Kidney (tissue), 22 donors: ENCODE measurements at regions of chr1 and their contacts with region 1.

Region 1: GRCh38 chr1:47189844-47190508 is at the start of gene PDZK1IP1:
- DNase-seq: peak in 3 of 5 donors; percentile 34 to 96 (median 37)
- H3K4me3 ChIP-seq: peak within 1 kb of the TSS in 2 of 3 donors; percentile 88 to 93
- H3K27ac ChIP-seq: peak within 1 kb of the TSS; percentile 95 to 99
- H3K4me1 ChIP-seq: peaks cover 0 to 30% (median 21%) of the 10 kb centered on the region in 3 donors
- H3K27me3 ChIP-seq: no peaks in the 10 kb centered on the region
- CTCF ChIP-seq: no peak
- total RNA-seq, gene PDZK1IP1: 245 TPM

Region 2: DNA sequence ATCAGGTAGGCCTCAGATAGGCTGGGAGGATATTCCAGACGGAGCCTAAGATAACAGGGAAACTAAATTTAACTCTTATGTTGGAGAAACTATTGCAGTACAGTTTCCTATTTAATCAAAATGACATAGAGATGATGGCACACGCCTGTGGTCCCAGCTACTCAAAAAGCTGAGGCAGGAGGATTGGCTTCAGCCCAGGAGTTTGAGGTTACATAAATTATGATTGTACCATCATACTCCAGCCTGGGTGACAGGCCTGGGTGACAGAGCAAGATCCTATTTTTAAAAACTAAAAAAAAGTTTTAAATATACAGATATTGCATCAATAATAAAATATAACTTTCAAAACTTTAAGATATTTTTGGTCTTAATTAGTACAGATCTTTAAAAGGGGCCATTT is 67.2 kb after region 1 on chr1:
- intact Hi-C with region 1: loop called (anchors 10 kb)
- DNase-seq: no peak
- H3K4me3 ChIP-seq: no peak overlapping the region
- H3K27ac ChIP-seq: no peak overlapping the region
- H3K4me1 ChIP-seq: no peaks in the 10 kb centered on the region
- H3K27me3 ChIP-seq: no peaks in the 10 kb centered on the region
- CTCF ChIP-seq: no peak

Region 3: GRCh38 chr1:47515164-47515789 is 325.3 kb after region 1 on chr1:
- intact Hi-C with region 1: no loop called
- DNase-seq: peak in 2 of 5 donors; percentile 33 to 37
- H3K4me3 ChIP-seq: no peak overlapping the region
- H3K27ac ChIP-seq: no peak overlapping the region
- H3K4me1 ChIP-seq: no peaks in the 10 kb centered on the region
- H3K27me3 ChIP-seq: no peaks in the 10 kb centered on the region
- CTCF ChIP-seq: no peak

Region 4: DNA sequence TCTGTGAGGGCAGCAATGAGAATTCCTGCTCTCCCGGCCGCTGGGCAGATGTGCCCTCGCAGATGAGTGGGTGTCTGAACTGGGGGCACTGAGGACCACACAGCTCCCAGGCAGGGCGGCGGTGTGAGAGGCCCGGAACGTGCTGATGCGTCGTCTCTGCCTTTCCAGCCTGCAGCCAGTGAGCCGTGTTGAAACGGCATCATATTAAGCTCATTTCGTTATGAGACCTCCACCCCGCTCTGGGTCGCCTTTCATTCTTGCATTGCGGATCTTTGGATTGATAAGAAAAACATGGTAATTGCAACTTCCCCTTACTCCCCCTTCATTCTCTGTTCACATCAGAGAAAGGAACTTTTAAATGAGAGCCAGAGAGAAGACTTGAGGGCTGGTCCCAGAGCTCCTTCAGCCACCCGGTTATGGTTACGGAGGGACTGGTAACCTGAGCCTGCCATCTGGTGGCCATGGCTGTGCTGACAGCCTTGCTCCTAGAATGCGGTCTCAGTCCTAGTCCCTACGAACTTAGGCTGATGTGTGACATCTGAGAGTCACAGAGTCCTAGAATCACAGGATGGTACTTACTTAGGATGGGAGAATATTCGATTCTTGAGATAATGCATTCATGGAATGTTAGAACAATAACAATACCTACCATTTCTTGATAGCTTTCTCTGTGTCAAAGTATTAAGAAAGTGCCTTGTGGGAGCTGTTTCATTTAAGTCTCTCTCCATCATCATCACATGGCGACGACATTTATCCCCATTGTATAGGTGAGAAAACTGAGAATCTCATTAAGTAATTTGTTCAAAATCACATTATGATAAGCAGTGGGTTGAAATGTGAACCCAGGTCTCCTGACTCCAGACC is 536.2 kb after region 1 on chr1:
- intact Hi-C with region 1: loop called (anchors 10 kb)
- DNase-seq: peak; percentile 86 to 93 (median 89)
- H3K4me3 ChIP-seq: peak overlapping the region in 1 of 3 donors; percentile 16
- H3K27ac ChIP-seq: no peak overlapping the region
- H3K4me1 ChIP-seq: peaks cover 0 to 5% (median 0%) of the 10 kb centered on the region in 3 donors
- H3K27me3 ChIP-seq: peaks cover 3% of the 10 kb centered on the region
- CTCF ChIP-seq: peak; percentile 90